ENCODE measurements at regions of chr1 and their contacts with region 1.

Region 1: GRCh38 chr1:101238681-101239094 is 1.9 kb downstream of the S1PR1 start:
- DNase-seq: peak; percentile 76 to 92 (median 84)
- ATAC-seq: peak; percentile 35
- H3K4me3 ChIP-seq: peak overlapping the region; percentile 50 to 99
- H3K4me3 Mint-ChIP-seq: peak overlapping the region; percentile 99
- H3K27ac ChIP-seq: peak overlapping the region; percentile 68 to 71
- H3K27ac Mint-ChIP-seq: peak overlapping the region; percentile 98
- H3K4me1 ChIP-seq: peaks cover 64% of the 10 kb centered on the region
- H3K4me1 Mint-ChIP-seq: peaks cover 67% of the 10 kb centered on the region
- H3K27me3 ChIP-seq: no peaks in the 10 kb centered on the region
- H3K27me3 Mint-ChIP-seq: no peaks in the 10 kb centered on the region
- CTCF ChIP-seq: peak; percentile 89

Region 2: DNA sequence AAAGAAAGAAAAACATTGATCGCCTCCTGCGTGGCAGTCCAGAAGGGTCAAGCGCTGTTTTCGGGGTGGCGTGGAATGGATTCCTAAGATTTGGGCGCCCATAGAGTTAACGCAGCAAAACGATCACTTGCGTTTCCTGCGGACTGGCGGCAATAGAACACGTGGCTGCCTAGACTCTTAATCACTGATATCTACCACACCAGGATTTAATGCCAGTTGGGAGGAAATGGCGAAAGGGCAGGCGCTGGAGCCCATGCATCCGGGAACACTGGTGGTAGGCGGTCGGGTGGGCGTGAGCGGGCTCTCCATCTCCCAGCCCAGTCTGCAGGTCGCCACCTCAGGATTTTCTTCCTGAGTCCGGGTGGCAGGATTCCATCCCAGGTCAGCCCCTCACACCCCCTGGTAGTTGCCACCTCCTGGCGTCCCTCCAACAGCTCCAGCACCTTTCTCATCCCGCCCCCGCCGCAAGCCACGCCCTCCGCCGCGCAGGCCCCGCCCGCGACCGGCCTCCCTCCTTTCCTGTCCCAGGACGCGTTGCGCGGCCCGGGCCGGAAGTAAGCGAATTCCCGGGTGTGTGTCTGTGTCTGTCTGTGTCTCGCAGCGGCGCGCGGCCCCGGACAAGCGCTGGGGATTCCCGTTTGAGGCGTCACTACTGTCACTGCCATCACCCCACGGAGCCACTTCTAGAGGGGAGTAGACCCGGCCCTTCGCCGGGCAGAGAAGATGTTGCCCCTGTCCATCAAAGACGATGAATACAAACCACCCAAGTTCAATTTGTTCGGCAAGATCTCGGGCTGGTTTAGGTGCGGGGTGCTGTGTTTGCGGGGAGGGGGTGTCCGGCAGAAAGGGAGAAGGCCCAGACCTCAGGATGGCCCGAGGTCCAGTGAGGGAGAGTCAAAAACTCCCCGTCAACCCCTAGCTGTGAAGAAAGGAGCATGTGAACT is 342.9 kb before region 1 on chr1 and contains the start of gene SLC30A7:
- CTCF ChIA-PET with region 1: interaction called, 5 read pairs
- POLR2A ChIA-PET with region 1: interaction called, 12 read pairs
- intact Hi-C with region 1: loop called in 1 of 2 experiments (anchors 2 kb)
- DNase-seq: peak; percentile 91 to 98 (median 96)
- ATAC-seq: peak; percentile 72
- H3K4me3 ChIP-seq: peak within 1 kb of the TSS; percentile 92 to 98
- H3K4me3 Mint-ChIP-seq: peak within 1 kb of the TSS; percentile 100
- H3K27ac ChIP-seq: peak within 1 kb of the TSS; percentile 85 to 99
- H3K27ac Mint-ChIP-seq: peak within 1 kb of the TSS; percentile 100
- H3K4me1 ChIP-seq: peaks cover 20% of the 10 kb centered on the region
- H3K4me1 Mint-ChIP-seq: peaks cover 49% of the 10 kb centered on the region
- H3K27me3 ChIP-seq: no peaks in the 10 kb centered on the region
- H3K27me3 Mint-ChIP-seq: no peaks in the 10 kb centered on the region
- CTCF ChIP-seq: no peak
- total RNA-seq, gene SLC30A7: 18.8 to 20.2 TPM

Region 3: GRCh38 chr1:100941098-100941527 is 297.6 kb before region 1 on chr1:
- CTCF ChIA-PET with region 1: interaction called, 8 read pairs
- POLR2A ChIA-PET with region 1: interaction called, 11 read pairs
- intact Hi-C with region 1: no loop called
- DNase-seq: no peak
- ATAC-seq: no peak
- H3K4me3 ChIP-seq: no peak overlapping the region
- H3K4me3 Mint-ChIP-seq: no peak overlapping the region
- H3K27ac ChIP-seq: peak overlapping the region in 1 of 2 experiments; percentile 49
- H3K27ac Mint-ChIP-seq: peak overlapping the region; percentile 90
- H3K4me1 ChIP-seq: peaks cover 35% of the 10 kb centered on the region
- H3K4me1 Mint-ChIP-seq: peaks cover 61% of the 10 kb centered on the region
- H3K27me3 ChIP-seq: no peaks in the 10 kb centered on the region
- H3K27me3 Mint-ChIP-seq: no peaks in the 10 kb centered on the region
- CTCF ChIP-seq: no peak

Region 4: DNA sequence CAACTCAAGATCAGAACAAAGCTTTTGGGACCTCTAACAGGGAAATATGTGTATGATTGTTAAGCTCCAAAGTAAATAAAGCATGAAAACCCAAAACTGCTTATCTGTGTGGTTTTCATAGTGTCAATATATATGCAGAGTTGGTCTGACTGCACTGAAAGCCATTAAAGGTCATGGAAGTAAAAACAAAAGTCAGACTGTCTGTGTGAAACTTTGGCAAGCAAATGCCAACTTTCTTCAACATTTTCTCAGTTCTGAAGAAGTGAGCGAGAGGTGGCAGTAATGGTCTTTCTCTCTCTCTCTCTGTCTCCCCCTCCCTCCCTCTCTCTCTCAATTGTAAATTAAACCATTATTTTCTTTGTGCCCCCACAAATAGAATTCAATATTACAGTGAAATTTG is 101.9 kb before region 1 on chr1:
- CTCF ChIA-PET with region 1: interaction called, 55 read pairs
- POLR2A ChIA-PET with region 1: interaction called, 24 read pairs
- intact Hi-C with region 1: loop called (anchors 1 to 5 kb)
- DNase-seq: peak in 4 of 9 experiments; percentile 21 to 78 (median 50)
- ATAC-seq: peak; percentile 76
- H3K4me3 ChIP-seq: no peak overlapping the region
- H3K4me3 Mint-ChIP-seq: peak overlapping the region; percentile 13
- H3K27ac ChIP-seq: peak overlapping the region; percentile 12 to 50
- H3K27ac Mint-ChIP-seq: peak overlapping the region; percentile 85
- H3K4me1 ChIP-seq: peaks cover 35% of the 10 kb centered on the region
- H3K4me1 Mint-ChIP-seq: peaks cover 60% of the 10 kb centered on the region
- H3K27me3 ChIP-seq: no peaks in the 10 kb centered on the region
- H3K27me3 Mint-ChIP-seq: no peaks in the 10 kb centered on the region
- CTCF ChIP-seq: peak; percentile 58

Region 5: GRCh38 chr1:101262630-101263348 is 24.1 kb after region 1 on chr1:
- CTCF ChIA-PET with region 1: interaction called, 19 read pairs
- POLR2A ChIA-PET with region 1: interaction called, 6 read pairs
- intact Hi-C with region 1: loop called in 1 of 2 experiments (anchors 2 kb)
- DNase-seq: peak in 3 of 9 experiments; percentile 22 to 67 (median 48)
- ATAC-seq: peak; percentile 49
- H3K4me3 ChIP-seq: peak overlapping the region in 1 of 2 experiments; percentile 7
- H3K4me3 Mint-ChIP-seq: peak overlapping the region; percentile 46
- H3K27ac ChIP-seq: peak overlapping the region in 1 of 2 experiments; percentile 52
- H3K27ac Mint-ChIP-seq: peak overlapping the region; percentile 65
- H3K4me1 ChIP-seq: peaks cover 89% of the 10 kb centered on the region
- H3K4me1 Mint-ChIP-seq: peaks cover 86% of the 10 kb centered on the region
- H3K27me3 ChIP-seq: no peaks in the 10 kb centered on the region
- H3K27me3 Mint-ChIP-seq: no peaks in the 10 kb centered on the region
- CTCF ChIP-seq: no peak

Region 6: DNA sequence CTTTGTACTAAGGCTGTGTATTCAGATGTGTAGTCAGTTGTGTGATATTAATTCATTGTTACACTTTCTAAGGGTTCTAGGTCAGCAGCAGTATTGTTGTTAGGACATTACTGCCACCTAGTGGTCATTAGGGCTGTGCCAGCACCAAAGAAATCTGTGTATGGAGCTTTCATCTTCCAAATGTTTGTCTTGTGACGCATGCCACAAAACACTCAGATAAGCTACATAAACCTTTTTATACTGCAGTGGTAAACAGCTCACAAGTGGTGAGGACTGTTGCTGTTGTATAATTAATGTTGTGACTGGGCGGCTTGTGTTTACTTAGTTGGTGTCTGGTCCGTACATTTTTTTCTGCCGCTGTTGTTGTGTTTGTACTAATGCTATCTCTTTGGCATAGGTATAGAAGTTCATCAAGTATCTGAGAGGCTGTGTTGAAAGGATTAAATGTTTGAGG is 49.8 kb after region 1 on chr1:
- CTCF ChIA-PET with region 1: interaction called, 405 read pairs
- POLR2A ChIA-PET with region 1: interaction called, 56 read pairs
- intact Hi-C with region 1: loop called (anchors 1 kb)
- DNase-seq: peak; percentile 39 to 89 (median 73)
- ATAC-seq: peak; percentile 66
- H3K4me3 ChIP-seq: no peak overlapping the region
- H3K4me3 Mint-ChIP-seq: no peak overlapping the region
- H3K27ac ChIP-seq: peak overlapping the region in 1 of 2 experiments; percentile 40
- H3K27ac Mint-ChIP-seq: peak overlapping the region; percentile 86
- H3K4me1 ChIP-seq: peaks cover 69% of the 10 kb centered on the region
- H3K4me1 Mint-ChIP-seq: peaks cover 73% of the 10 kb centered on the region
- H3K27me3 ChIP-seq: no peaks in the 10 kb centered on the region
- H3K27me3 Mint-ChIP-seq: no peaks in the 10 kb centered on the region
- CTCF ChIP-seq: peak; percentile 93

Measured in CD8-positive, alpha-beta T cell (primary cell).